ENCODE measurements at regions of chr3 and their contacts with region 1.

Region 1: GRCh38 chr3:129490242-129491045 is 38.0 kb upstream of the RHO start:
- DNase-seq: peak; percentile 93
- H3K4me3 ChIP-seq: no peak overlapping the region
- H3K27ac ChIP-seq: peak overlapping the region; percentile 62 to 73 (median 68)
- H3K4me1 ChIP-seq: peaks cover 18 to 34% (median 22%) of the 10 kb centered on the region in 4 donors
- H3K27me3 ChIP-seq: no peaks in the 10 kb centered on the region
- CTCF ChIP-seq: peak; percentile 80 to 84 (median 81)
- EP300 ChIP-seq: no peak
- POLR2A ChIP-seq: no peak

Region 2: DNA sequence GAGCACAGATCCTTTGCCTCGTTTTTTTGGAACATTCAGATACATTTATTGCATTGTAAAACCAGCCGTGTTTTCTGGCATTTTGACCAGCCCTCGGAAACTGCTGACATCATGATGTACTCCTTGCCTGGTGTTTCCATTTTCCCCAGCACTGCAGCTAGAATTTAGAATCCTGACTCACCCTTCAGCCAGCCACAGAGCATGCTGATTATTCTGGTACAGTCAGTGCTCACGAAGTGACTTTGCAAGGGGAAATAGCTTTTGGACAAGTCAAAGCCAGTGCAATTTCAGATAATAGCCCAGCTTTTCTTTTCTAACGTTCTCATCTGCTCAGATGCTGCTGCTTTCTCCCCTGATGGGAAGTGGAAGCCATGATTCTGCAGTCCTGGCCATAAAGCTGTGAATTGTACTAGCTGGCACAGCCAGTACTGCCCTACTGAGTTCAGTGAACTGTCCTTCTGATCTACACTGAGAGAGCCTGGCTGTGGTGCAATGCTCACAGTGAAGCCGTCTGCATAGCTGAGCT is 294.6 kb before region 1 on chr3:
- intact Hi-C with region 1: no loop called
- DNase-seq: no peak
- H3K4me3 ChIP-seq: peak overlapping the region; percentile 12 to 33 (median 20)
- H3K27ac ChIP-seq: peak overlapping the region; percentile 76 to 86 (median 76)
- H3K4me1 ChIP-seq: peaks cover 28 to 32% (median 31%) of the 10 kb centered on the region in 4 donors
- H3K27me3 ChIP-seq: no peaks in the 10 kb centered on the region
- CTCF ChIP-seq: no peak
- EP300 ChIP-seq: no peak
- POLR2A ChIP-seq: no peak

Region 3: GRCh38 chr3:129602730-129603560 is 112.5 kb after region 1 on chr3:
- intact Hi-C with region 1: loop called (anchors 5 kb)
- DNase-seq: no peak
- H3K4me3 ChIP-seq: peak overlapping the region; percentile 65 to 75 (median 68)
- H3K27ac ChIP-seq: peak overlapping the region; percentile 80 to 85 (median 82)
- H3K4me1 ChIP-seq: peaks cover 61 to 96% (median 93%) of the 10 kb centered on the region in 4 donors
- H3K27me3 ChIP-seq: peaks cover 0 to 20% (median 10%) of the 10 kb centered on the region in 4 donors
- CTCF ChIP-seq: no peak
- EP300 ChIP-seq: no peak
- POLR2A ChIP-seq: no peak

Measured in esophagus muscularis mucosa (tissue), 4 donors.